ENCODE measurements at regions of chr6 and their contacts with region 1.

Region 1: GRCh38 chr6:122471107-122472021 is at the start of gene SERINC1:
- DNase-seq: peak; percentile 77 to 96 (median 92)
- ATAC-seq: peak; percentile 96
- H3K4me3 ChIP-seq: peak within 1 kb of the TSS; percentile 87
- H3K4me3 Mint-ChIP-seq: peak within 1 kb of the TSS; percentile 98 to 100 (median 100)
- H3K27ac ChIP-seq: peak within 1 kb of the TSS; percentile 98
- H3K27ac Mint-ChIP-seq: peak within 1 kb of the TSS; percentile 99 to 100 (median 100)
- H3K4me1 ChIP-seq: peaks cover 33 to 34% of the 10 kb centered on the region in 2 donors
- H3K4me1 Mint-ChIP-seq: peaks cover 24 to 53% (median 44%) of the 10 kb centered on the region in 7 donors
- H3K27me3 ChIP-seq: no peaks in the 10 kb centered on the region
- H3K27me3 Mint-ChIP-seq: peaks cover 0 to 2% (median 0%) of the 10 kb centered on the region in 5 donors
- total RNA-seq, gene SERINC1: 63.7 to 139 (median 130) TPM

Region 2: GRCh38 chr6:122381497-122382265 is 89.7 kb before region 1 on chr6:
- CTCF ChIA-PET with region 1: no interaction called
- POLR2A ChIA-PET with region 1: interaction called, 4 read pairs
- intact Hi-C with region 1: loop called (anchors 1 to 5 kb)
- DNase-seq: peak in 8 of 9 donors; percentile 32 to 81 (median 70)
- ATAC-seq: peak; percentile 98
- H3K4me3 ChIP-seq: no peak overlapping the region
- H3K4me3 Mint-ChIP-seq: peak overlapping the region in 1 of 10 donors; percentile 7
- H3K27ac ChIP-seq: no peak overlapping the region
- H3K27ac Mint-ChIP-seq: peak overlapping the region in 2 of 9 donors; percentile 45 to 60
- H3K4me1 ChIP-seq: no peaks in the 10 kb centered on the region
- H3K4me1 Mint-ChIP-seq: peaks cover 6 to 9% (median 7%) of the 10 kb centered on the region in 7 donors
- H3K27me3 ChIP-seq: no peaks in the 10 kb centered on the region
- H3K27me3 Mint-ChIP-seq: peaks cover 0 to 31% (median 9%) of the 10 kb centered on the region in 5 donors

Region 3: GRCh38 chr6:122408702-122409458 is 62.5 kb before region 1 on chr6:
- CTCF ChIA-PET with region 1: interaction called, 3 read pairs
- POLR2A ChIA-PET with region 1: interaction called, 20 read pairs
- intact Hi-C with region 1: loop called (anchors 1 to 2 kb)
- DNase-seq: peak in 7 of 9 donors; percentile 59 to 78 (median 69)
- ATAC-seq: peak; percentile 89
- H3K4me3 ChIP-seq: peak overlapping the region; percentile 36
- H3K4me3 Mint-ChIP-seq: peak overlapping the region; percentile 65 to 91 (median 82)
- H3K27ac ChIP-seq: peak overlapping the region; percentile 79
- H3K27ac Mint-ChIP-seq: peak overlapping the region; percentile 70 to 98 (median 93)
- H3K4me1 ChIP-seq: peaks cover 6 to 51% of the 10 kb centered on the region in 2 donors
- H3K4me1 Mint-ChIP-seq: peaks cover 40 to 98% (median 87%) of the 10 kb centered on the region in 7 donors
- H3K27me3 ChIP-seq: no peaks in the 10 kb centered on the region
- H3K27me3 Mint-ChIP-seq: no peaks in the 10 kb centered on the region

Region 4: DNA sequence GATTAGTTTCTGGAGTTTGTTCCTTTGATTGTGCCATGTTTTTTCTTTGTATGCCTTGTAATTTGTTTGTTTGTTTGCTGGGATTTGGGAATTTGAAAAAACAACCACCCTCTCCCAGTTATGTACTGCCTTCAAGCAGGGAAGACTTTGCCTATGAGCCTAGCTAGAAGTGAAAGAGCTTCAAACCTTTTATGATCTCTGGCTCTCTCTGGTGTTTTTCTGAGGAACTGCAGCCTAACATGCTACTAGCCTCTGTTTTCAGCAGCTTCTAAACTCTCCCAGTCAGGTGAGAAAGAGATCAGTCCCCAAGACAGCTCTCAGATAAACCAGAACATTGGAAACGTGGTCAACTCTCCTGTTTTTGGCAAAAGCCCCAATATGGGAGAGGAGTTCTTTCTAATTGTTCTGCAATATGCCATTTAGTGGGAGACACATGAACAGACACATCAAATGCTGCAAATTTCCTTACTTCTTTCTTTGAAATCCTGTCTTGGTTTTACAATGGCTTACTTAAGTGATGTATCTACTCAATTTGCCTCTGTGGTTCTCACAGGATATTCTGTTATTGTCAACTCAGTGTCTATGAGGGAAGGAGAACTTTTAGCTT is 59.2 kb after region 1 on chr6:
- CTCF ChIA-PET with region 1: interaction called, 15 read pairs
- POLR2A ChIA-PET with region 1: interaction called, 7 read pairs
- intact Hi-C with region 1: loop called (anchors 1 kb)
- DNase-seq: peak in 8 of 9 donors; percentile 36 to 73 (median 64)
- ATAC-seq: peak; percentile 86
- H3K4me3 ChIP-seq: no peak overlapping the region
- H3K4me3 Mint-ChIP-seq: no peak overlapping the region
- H3K27ac ChIP-seq: no peak overlapping the region
- H3K27ac Mint-ChIP-seq: no peak overlapping the region
- H3K4me1 ChIP-seq: no peaks in the 10 kb centered on the region
- H3K4me1 Mint-ChIP-seq: peaks cover 0 to 8% (median 0%) of the 10 kb centered on the region in 7 donors
- H3K27me3 ChIP-seq: no peaks in the 10 kb centered on the region
- H3K27me3 Mint-ChIP-seq: peaks cover 34 to 48% (median 37%) of the 10 kb centered on the region in 5 donors

Region 5: DNA sequence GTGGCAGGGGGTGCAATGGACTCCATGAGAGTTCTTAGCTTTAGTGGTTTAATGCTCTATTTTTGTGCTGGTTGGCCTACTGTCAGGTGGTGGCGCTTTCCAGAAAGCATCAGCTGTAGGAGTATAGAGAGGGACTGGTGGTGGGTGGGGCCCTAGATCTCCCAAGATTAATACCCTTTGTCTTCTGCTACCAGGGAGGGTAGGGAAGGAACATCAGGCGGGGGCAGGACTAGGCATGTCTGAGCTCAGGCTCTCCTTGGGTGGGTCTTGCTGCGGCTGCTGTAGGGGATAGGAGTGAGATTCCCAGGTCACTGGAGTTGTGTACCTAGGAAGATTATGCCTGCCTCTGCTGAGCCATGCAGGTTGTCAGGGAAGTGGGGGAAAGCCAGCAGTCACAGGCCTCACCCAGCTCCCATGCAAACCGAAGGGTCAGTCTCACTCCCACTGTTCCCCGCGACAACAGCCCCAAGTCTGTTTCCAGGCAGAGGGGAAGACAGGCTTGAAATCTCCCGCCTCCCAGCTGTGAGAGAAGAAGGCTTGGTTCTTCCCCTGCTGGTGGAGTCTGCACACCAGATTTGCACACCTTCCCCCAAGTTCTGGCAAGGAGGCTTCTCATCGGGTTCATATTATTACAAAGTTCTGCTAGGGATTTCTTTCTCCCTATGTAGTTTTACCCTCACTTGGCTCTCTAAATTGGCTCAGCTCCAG is 92.2 kb after region 1 on chr6:
- CTCF ChIA-PET with region 1: no interaction called
- POLR2A ChIA-PET with region 1: no interaction called
- intact Hi-C with region 1: no loop called
- DNase-seq: no peak
- ATAC-seq: no peak
- H3K4me3 ChIP-seq: no peak overlapping the region
- H3K4me3 Mint-ChIP-seq: no peak overlapping the region
- H3K27ac ChIP-seq: no peak overlapping the region
- H3K27ac Mint-ChIP-seq: no peak overlapping the region
- H3K4me1 ChIP-seq: no peaks in the 10 kb centered on the region
- H3K4me1 Mint-ChIP-seq: no peaks in the 10 kb centered on the region
- H3K27me3 ChIP-seq: no peaks in the 10 kb centered on the region
- H3K27me3 Mint-ChIP-seq: peaks cover 0 to 20% (median 6%) of the 10 kb centered on the region in 5 donors

Region 6: GRCh38 chr6:122645256-122645655 is 173.9 kb after region 1 on chr6:
- CTCF ChIA-PET with region 1: no interaction called
- POLR2A ChIA-PET with region 1: no interaction called
- intact Hi-C with region 1: no loop called
- DNase-seq: no peak
- ATAC-seq: no peak
- H3K4me3 ChIP-seq: no peak overlapping the region
- H3K4me3 Mint-ChIP-seq: no peak overlapping the region
- H3K27ac ChIP-seq: no peak overlapping the region
- H3K27ac Mint-ChIP-seq: no peak overlapping the region
- H3K4me1 ChIP-seq: no peaks in the 10 kb centered on the region
- H3K4me1 Mint-ChIP-seq: no peaks in the 10 kb centered on the region
- H3K27me3 ChIP-seq: no peaks in the 10 kb centered on the region
- H3K27me3 Mint-ChIP-seq: peaks cover 0 to 6% (median 0%) of the 10 kb centered on the region in 5 donors

Region 7: GRCh38 chr6:122730775-122731386 is 259.5 kb after region 1 on chr6:
- CTCF ChIA-PET with region 1: no interaction called
- POLR2A ChIA-PET with region 1: no interaction called
- intact Hi-C with region 1: loop called in 1 of 2 experiments (anchors 1 kb)
- DNase-seq: peak in 5 of 9 donors; percentile 11 to 37 (median 17)
- ATAC-seq: no peak
- H3K4me3 ChIP-seq: no peak overlapping the region
- H3K4me3 Mint-ChIP-seq: no peak overlapping the region
- H3K27ac ChIP-seq: no peak overlapping the region
- H3K27ac Mint-ChIP-seq: no peak overlapping the region
- H3K4me1 ChIP-seq: no peaks in the 10 kb centered on the region
- H3K4me1 Mint-ChIP-seq: no peaks in the 10 kb centered on the region
- H3K27me3 ChIP-seq: peaks cover 0 to 3% of the 10 kb centered on the region in 2 donors
- H3K27me3 Mint-ChIP-seq: peaks cover 15 to 22% (median 18%) of the 10 kb centered on the region in 5 donors

Region 8: GRCh38 chr6:123316733-123317323 is 845.5 kb after region 1 on chr6:
- CTCF ChIA-PET with region 1: no interaction called
- POLR2A ChIA-PET with region 1: no interaction called
- intact Hi-C with region 1: loop called in 1 of 2 experiments (anchors 5 kb)
- DNase-seq: peak in 2 of 9 donors; percentile 1 to 14
- ATAC-seq: no peak
- H3K4me3 ChIP-seq: no peak overlapping the region
- H3K4me3 Mint-ChIP-seq: no peak overlapping the region
- H3K27ac ChIP-seq: no peak overlapping the region
- H3K27ac Mint-ChIP-seq: no peak overlapping the region
- H3K4me1 ChIP-seq: no peaks in the 10 kb centered on the region
- H3K4me1 Mint-ChIP-seq: no peaks in the 10 kb centered on the region
- H3K27me3 ChIP-seq: no peaks in the 10 kb centered on the region
- H3K27me3 Mint-ChIP-seq: no peaks in the 10 kb centered on the region

Region 9: GRCh38 chr6:124119596-124119995 is 1648.2 kb after region 1 on chr6:
- CTCF ChIA-PET with region 1: no interaction called
- POLR2A ChIA-PET with region 1: no interaction called
- intact Hi-C with region 1: no loop called
- DNase-seq: no peak
- ATAC-seq: no peak
- H3K4me3 ChIP-seq: no peak overlapping the region
- H3K4me3 Mint-ChIP-seq: no peak overlapping the region
- H3K27ac ChIP-seq: no peak overlapping the region
- H3K27ac Mint-ChIP-seq: no peak overlapping the region
- H3K4me1 ChIP-seq: no peaks in the 10 kb centered on the region
- H3K4me1 Mint-ChIP-seq: no peaks in the 10 kb centered on the region
- H3K27me3 ChIP-seq: no peaks in the 10 kb centered on the region
- H3K27me3 Mint-ChIP-seq: no peaks in the 10 kb centered on the region